Activated CD8-positive, alpha-beta T cell treated with anti-CD3 and anti-CD28 coated beads for 36 hours (primary cell): ENCODE measurements at regions of chr6 and their contacts with region 1.

Region 1: GRCh38 chr6:79078075-79079025 is at the start of gene PHIP:
- DNase-seq: peak; percentile 93
- ATAC-seq: peak; percentile 84
- H3K4me3 Mint-ChIP-seq: peak within 1 kb of the TSS; percentile 95
- H3K27ac Mint-ChIP-seq: peak within 1 kb of the TSS; percentile 97
- H3K4me1 Mint-ChIP-seq: peaks cover 28% of the 10 kb centered on the region
- H3K27me3 Mint-ChIP-seq: peaks cover 11% of the 10 kb centered on the region
- CTCF ChIP-seq: no peak
- total RNA-seq, gene PHIP: 24.7 to 25.7 TPM

Region 2: GRCh38 chr6:78867370-78868040 is 210.8 kb before region 1 on chr6 and contains the start of gene IRAK1BP1:
- CTCF ChIA-PET with region 1: no interaction called
- POLR2A ChIA-PET with region 1: interaction called, 7 read pairs
- intact Hi-C with region 1: loop called (anchors 2 kb)
- DNase-seq: peak; percentile 93
- ATAC-seq: peak; percentile 97
- H3K4me3 Mint-ChIP-seq: peak within 1 kb of the TSS; percentile 97
- H3K27ac Mint-ChIP-seq: peak within 1 kb of the TSS; percentile 90
- H3K4me1 Mint-ChIP-seq: peaks cover 14% of the 10 kb centered on the region
- H3K27me3 Mint-ChIP-seq: no peaks in the 10 kb centered on the region
- CTCF ChIP-seq: peak; percentile 26
- total RNA-seq, gene IRAK1BP1: 2.3 to 2.6 TPM

Region 3: GRCh38 chr6:79040083-79040482 is 38.3 kb before region 1 on chr6:
- CTCF ChIA-PET with region 1: interaction called, 4 read pairs
- POLR2A ChIA-PET with region 1: interaction called, 8 read pairs
- intact Hi-C with region 1: loop called (anchors 5 kb)
- DNase-seq: peak; percentile 24
- ATAC-seq: peak; percentile 88
- H3K4me3 Mint-ChIP-seq: no peak overlapping the region
- H3K27ac Mint-ChIP-seq: no peak overlapping the region
- H3K4me1 Mint-ChIP-seq: peaks cover 53% of the 10 kb centered on the region
- H3K27me3 Mint-ChIP-seq: no peaks in the 10 kb centered on the region
- CTCF ChIP-seq: no peak

Region 4: GRCh38 chr6:79233611-79234149 is 155.3 kb after region 1 on chr6:
- CTCF ChIA-PET with region 1: no interaction called
- POLR2A ChIA-PET with region 1: interaction called, 13 read pairs
- intact Hi-C with region 1: loop called (anchors 1 kb)
- DNase-seq: peak; percentile 82
- ATAC-seq: peak; percentile 73
- H3K4me3 Mint-ChIP-seq: peak overlapping the region; percentile 92
- H3K27ac Mint-ChIP-seq: peak overlapping the region; percentile 86
- H3K4me1 Mint-ChIP-seq: peaks cover 17% of the 10 kb centered on the region
- H3K27me3 Mint-ChIP-seq: no peaks in the 10 kb centered on the region
- CTCF ChIP-seq: no peak